ENCODE measurements at regions of chr20 and their contacts with region 1.

Region 1: DNA sequence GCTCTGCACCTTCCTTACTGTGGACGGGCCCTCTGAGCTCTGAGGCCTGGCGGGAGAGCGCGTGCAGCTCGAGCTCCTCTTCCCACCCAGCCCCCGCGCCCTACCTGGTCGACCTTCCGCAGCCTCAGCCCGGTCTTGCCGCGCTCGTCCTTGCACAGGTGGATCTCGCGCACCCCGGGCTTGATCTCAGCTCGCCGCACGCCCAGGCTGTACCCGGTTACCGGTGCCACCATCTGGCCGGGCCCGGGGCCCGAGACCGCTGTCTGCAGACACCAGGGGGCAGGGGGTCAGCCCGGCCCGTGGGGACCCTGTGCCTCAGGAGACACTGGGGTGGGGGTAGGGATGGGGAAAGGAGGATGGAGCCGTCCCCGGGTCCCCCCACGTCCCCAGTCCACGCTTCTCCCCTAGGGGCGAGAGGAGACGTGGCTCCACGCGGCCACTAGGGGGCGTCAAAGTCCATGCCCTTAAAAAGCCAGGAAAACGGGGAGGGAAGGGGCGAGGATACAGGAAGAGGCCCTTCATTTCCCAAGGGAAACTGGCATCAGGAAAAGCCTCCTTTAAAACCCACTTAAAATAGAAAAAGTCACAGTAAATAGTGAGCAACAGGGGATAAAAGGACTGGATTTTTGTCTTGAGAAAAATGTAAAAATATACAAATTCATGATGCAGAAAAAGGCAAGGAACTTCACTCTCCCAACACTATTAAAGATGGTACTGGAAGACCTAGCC is 15.5 kb downstream of the SDCBP2 start:
- DNase-seq: peak; percentile 78
- ATAC-seq: peak; percentile 65
- H3K4me3 ChIP-seq: no peak overlapping the region
- H3K4me3 Mint-ChIP-seq: no peak overlapping the region
- H3K27ac ChIP-seq: no peak overlapping the region
- H3K27ac Mint-ChIP-seq: no peak overlapping the region
- H3K4me1 ChIP-seq: peaks cover 0 to 7% of the 10 kb centered on the region in 2 donors
- H3K4me1 Mint-ChIP-seq: no peaks in the 10 kb centered on the region
- H3K27me3 ChIP-seq: no peaks in the 10 kb centered on the region
- H3K27me3 Mint-ChIP-seq: peaks cover 4% of the 10 kb centered on the region
- CTCF ChIP-seq: peak; percentile 99

Region 2: GRCh38 chr20:1274485-1275311 is 38.7 kb before region 1 on chr20:
- CTCF ChIA-PET with region 1: no interaction called
- POLR2A ChIA-PET with region 1: no interaction called
- intact Hi-C with region 1: no loop called
- DNase-seq: no peak
- ATAC-seq: no peak
- H3K4me3 ChIP-seq: no peak overlapping the region
- H3K4me3 Mint-ChIP-seq: no peak overlapping the region
- H3K27ac ChIP-seq: no peak overlapping the region
- H3K27ac Mint-ChIP-seq: no peak overlapping the region
- H3K4me1 ChIP-seq: no peaks in the 10 kb centered on the region
- H3K4me1 Mint-ChIP-seq: peaks cover 3% of the 10 kb centered on the region
- H3K27me3 ChIP-seq: no peaks in the 10 kb centered on the region
- H3K27me3 Mint-ChIP-seq: no peaks in the 10 kb centered on the region
- CTCF ChIP-seq: no peak

Region 3: GRCh38 chr20:1296967-1297366 is 16.4 kb before region 1 on chr20:
- CTCF ChIA-PET with region 1: interaction called, 12 read pairs
- POLR2A ChIA-PET with region 1: no interaction called
- intact Hi-C with region 1: no loop called
- DNase-seq: no peak
- ATAC-seq: no peak
- H3K4me3 ChIP-seq: no peak overlapping the region
- H3K4me3 Mint-ChIP-seq: no peak overlapping the region
- H3K27ac ChIP-seq: no peak overlapping the region
- H3K27ac Mint-ChIP-seq: no peak overlapping the region
- H3K4me1 ChIP-seq: no peaks in the 10 kb centered on the region
- H3K4me1 Mint-ChIP-seq: no peaks in the 10 kb centered on the region
- H3K27me3 ChIP-seq: no peaks in the 10 kb centered on the region
- H3K27me3 Mint-ChIP-seq: no peaks in the 10 kb centered on the region
- CTCF ChIP-seq: no peak

Region 4: DNA sequence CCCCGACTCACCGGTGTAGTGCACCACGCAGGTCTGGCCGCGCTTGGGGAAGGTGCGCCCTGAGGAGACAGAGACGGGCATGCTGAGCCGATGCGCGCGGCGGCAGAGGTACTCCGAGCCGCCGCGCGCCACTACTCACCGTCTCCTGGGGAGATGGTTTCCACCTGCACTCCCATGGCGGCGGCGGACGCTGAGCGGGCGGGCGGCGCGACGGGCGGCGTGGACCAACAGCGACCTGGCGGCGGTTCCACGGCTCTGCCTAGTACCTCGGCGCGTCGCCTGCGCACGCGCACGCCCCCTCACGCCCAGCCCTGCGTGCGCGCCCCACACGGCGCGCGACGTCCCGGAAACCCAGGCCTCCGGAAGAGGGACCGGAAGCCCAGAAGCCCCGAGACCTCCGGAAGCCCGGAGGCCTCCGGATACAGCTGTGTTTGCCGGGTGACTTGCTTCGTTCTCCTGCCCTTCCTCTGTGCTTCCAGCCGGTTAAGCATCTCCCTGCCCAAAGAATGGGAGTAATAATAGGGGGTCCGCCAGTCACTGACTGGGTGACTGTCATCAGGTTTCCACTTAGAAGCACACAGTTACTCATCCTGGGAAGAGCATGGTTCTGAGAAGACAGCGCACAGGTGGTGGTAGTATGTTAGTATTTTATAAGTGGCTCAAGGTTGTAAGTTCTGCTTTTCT is 79.6 kb after region 1 on chr20 and contains the start of gene FKBP1A:
- CTCF ChIA-PET with region 1: interaction called, 6 read pairs
- POLR2A ChIA-PET with region 1: no interaction called
- intact Hi-C with region 1: loop called (anchors 1 kb)
- DNase-seq: peak; percentile 97
- ATAC-seq: peak; percentile 88
- H3K4me3 ChIP-seq: peak within 1 kb of the TSS; percentile 66 to 93 (median 76)
- H3K4me3 Mint-ChIP-seq: peak within 1 kb of the TSS; percentile 100
- H3K27ac ChIP-seq: peak within 1 kb of the TSS; percentile 82 to 84
- H3K27ac Mint-ChIP-seq: peak within 1 kb of the TSS; percentile 100
- H3K4me1 ChIP-seq: peaks cover 64 to 66% of the 10 kb centered on the region in 2 donors
- H3K4me1 Mint-ChIP-seq: peaks cover 83% of the 10 kb centered on the region
- H3K27me3 ChIP-seq: no peaks in the 10 kb centered on the region
- H3K27me3 Mint-ChIP-seq: no peaks in the 10 kb centered on the region
- CTCF ChIP-seq: no peak
- total RNA-seq, gene FKBP1A: 86.5 and 86.7 TPM in 2 replicates